ENCODE measurements at regions of chr2 and their contacts with region 1.

Region 1: GRCh38 chr2:208118918-208119317 is 5.4 kb downstream of the CRYGD start:
- DNase-seq: no peak
- H3K4me3 ChIP-seq: no peak overlapping the region
- H3K4me3 Mint-ChIP-seq: no peak overlapping the region
- H3K27ac Mint-ChIP-seq: peak overlapping the region; percentile 79
- H3K4me1 ChIP-seq: peaks cover 47% of the 10 kb centered on the region
- H3K4me1 Mint-ChIP-seq: peaks cover 24% of the 10 kb centered on the region
- H3K27me3 ChIP-seq: no peaks in the 10 kb centered on the region
- H3K27me3 Mint-ChIP-seq: no peaks in the 10 kb centered on the region
- CTCF ChIP-seq: no peak

Region 2: DNA sequence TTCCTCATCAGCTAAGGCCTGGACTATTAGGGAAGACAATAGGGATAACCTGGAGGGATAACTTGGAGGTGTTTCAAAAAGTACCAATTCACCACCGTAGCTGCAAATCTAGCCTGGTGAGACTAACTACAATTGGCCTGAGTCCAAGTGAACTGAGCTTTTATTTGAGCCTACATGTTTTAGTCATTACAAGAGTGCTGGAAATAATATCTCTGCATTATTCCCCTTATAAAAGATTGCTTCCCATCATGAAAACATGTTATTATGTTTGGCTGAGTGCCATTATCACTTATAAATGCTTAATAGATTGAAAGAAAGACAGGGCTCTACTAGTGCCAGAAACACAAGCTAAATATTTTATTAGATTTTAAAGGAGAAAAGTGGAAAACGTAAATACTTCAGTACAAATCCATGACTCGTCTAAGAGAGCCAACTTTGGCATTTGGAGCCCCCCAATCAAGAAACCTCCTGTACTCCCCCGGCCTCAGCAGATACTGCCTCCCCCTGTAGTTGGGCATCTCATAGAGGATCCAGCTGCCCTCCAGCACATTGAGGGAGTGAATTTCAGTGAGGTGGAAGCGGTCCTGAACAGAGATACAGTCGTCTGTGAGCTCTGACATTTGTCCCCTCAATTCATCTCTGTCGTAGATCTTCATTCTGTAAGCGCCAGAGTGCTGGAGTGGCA is 23.5 kb after region 1 on chr2:
- CTCF ChIA-PET with region 1: no interaction called
- POLR2A ChIA-PET with region 1: no interaction called
- intact Hi-C with region 1: loop called (anchors 2 kb)
- DNase-seq: no peak
- H3K4me3 ChIP-seq: no peak overlapping the region
- H3K4me3 Mint-ChIP-seq: no peak overlapping the region
- H3K27ac Mint-ChIP-seq: no peak overlapping the region
- H3K4me1 ChIP-seq: peaks cover 6% of the 10 kb centered on the region
- H3K4me1 Mint-ChIP-seq: peaks cover 11% of the 10 kb centered on the region
- H3K27me3 ChIP-seq: no peaks in the 10 kb centered on the region
- H3K27me3 Mint-ChIP-seq: no peaks in the 10 kb centered on the region
- CTCF ChIP-seq: no peak

Measured in Caco-2 (cell line).